AG04449 (cell line): ENCODE measurements at regions of chr11 and their contacts with region 1.

Region 1: GRCh38 chr11:120335908-120336640 is at the start of gene ARHGEF12:
- DNase-seq: peak; percentile 90
- H3K4me3 ChIP-seq: peak within 1 kb of the TSS; percentile 61
- CTCF ChIP-seq: peak; percentile 43

Region 2: DNA sequence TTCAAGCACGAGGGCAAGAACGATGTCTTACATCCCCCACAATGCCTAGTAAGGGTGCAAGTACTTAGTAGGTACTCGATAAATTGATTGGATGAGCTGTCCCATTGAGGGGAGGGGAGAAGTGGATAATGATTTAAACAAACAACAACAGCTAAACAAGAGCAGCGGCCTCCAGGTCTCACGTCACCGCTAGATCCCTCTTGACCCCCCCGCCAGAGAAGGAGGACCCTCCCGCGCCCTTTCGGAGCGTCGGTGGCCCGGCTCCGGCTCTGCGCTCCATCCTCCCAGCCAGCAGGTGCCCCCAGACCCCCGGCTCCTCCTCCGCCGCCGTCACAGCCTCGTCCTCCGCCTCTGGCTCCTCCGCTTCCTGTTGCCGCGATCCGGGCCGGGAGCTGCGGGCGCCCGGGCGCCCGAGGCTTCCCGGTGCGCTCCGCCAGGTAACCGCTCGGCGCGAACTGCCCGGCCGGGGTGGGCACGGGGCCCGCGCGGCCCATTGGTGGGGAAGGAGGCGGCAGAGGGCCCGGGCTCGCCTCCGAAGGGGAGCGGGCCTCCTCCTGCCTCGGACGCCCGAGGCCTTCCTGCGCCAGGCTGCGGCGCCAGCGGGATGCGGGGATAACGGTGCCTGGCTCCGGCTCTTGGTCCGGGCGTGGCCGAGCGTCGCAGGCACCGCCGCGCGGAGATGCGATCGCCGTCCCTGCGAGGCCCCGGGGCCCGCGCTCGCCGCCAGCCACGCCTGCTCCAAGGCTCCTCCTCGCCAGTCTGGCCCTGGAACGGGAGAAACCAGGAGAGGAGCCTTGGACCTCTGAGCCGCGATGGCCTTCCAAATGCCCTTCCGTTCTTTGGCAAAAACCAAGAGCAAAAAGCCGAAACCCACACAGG is 10.9 kb before region 1 on chr11 and contains the start of gene TLCD5:
- CTCF ChIA-PET with region 1: interaction called, 15 read pairs
- POLR2A ChIA-PET with region 1: no interaction called
- DNase-seq: no peak
- H3K4me3 ChIP-seq: peak within 1 kb of the TSS; percentile 70
- CTCF ChIP-seq: peak; percentile 36

Region 3: GRCh38 chr11:120400564-120401364 is 64.7 kb after region 1 on chr11:
- CTCF ChIA-PET with region 1: interaction called, 3 read pairs
- POLR2A ChIA-PET with region 1: interaction called, 10 read pairs
- DNase-seq: peak; percentile 92
- H3K4me3 ChIP-seq: peak overlapping the region; percentile 19
- CTCF ChIP-seq: no peak

Region 4: DNA sequence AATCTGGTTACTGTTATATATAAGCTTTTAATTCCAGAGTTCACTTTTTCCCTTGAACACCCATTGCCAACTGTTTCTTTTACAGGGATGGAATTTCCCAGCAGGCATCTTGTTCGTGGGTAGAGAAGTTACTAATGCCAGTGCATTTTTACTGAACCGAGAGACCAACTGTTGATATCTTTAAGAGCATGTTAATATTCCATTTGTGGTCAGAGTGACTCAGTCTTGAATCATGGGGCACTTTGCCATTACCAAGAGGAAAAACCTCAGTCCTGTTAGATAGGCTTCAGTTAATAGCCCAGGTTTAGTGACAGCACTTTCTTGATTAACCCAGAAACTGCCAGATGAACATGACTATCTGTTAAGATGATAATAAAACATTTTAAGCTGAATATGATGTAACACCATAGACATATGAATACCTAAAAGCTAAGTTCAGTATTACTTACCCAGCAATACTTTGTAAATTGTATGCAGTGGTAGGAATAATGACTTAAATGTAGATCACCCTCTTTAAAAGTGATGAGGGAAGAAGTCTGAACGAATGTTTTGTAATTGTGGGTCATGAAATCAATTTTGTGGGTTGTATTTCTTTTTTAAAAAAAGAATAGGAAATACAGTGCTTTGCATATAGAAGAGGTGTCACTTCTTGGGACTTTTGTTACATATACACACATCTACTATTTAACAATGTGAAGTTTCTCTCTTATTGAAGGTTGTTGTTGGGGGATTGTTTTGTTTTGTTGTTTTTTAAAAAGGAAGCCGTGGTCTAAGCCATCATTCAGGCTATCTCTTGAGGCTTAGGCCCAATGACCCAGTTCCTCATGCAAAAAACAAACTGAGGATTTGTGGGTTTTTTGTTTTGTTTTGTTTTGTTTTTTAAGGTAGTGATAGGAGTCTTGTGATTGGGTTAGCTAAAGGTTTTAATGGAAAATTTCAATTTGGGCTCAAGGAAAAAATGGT is 96.3 kb after region 1 on chr11:
- CTCF ChIA-PET with region 1: interaction called, 22 read pairs
- POLR2A ChIA-PET with region 1: interaction called, 6 read pairs
- DNase-seq: peak; percentile 98
- H3K4me3 ChIP-seq: no peak overlapping the region
- CTCF ChIP-seq: no peak

Region 5: DNA sequence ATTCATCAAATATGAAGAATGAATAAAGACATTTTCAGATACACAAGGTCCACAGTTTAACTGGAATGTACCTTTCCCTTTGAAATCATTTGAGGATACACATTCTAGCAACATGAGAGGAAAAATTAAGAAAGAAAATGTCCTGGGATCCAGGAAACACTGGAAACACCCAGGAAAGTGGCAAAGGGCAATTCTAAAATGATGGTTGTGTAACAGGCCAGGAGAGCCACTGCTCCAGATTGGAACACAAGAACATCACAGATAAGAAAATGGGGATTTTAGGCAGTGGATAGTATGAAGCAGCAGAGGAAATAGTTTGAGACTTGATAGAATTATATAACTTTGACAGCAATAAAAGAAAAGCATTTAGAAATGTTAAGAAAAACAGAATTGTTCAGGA is 119.4 kb after region 1 on chr11:
- CTCF ChIA-PET with region 1: interaction called, 13 read pairs
- POLR2A ChIA-PET with region 1: no interaction called
- DNase-seq: no peak
- H3K4me3 ChIP-seq: no peak overlapping the region
- CTCF ChIP-seq: no peak

Region 6: DNA sequence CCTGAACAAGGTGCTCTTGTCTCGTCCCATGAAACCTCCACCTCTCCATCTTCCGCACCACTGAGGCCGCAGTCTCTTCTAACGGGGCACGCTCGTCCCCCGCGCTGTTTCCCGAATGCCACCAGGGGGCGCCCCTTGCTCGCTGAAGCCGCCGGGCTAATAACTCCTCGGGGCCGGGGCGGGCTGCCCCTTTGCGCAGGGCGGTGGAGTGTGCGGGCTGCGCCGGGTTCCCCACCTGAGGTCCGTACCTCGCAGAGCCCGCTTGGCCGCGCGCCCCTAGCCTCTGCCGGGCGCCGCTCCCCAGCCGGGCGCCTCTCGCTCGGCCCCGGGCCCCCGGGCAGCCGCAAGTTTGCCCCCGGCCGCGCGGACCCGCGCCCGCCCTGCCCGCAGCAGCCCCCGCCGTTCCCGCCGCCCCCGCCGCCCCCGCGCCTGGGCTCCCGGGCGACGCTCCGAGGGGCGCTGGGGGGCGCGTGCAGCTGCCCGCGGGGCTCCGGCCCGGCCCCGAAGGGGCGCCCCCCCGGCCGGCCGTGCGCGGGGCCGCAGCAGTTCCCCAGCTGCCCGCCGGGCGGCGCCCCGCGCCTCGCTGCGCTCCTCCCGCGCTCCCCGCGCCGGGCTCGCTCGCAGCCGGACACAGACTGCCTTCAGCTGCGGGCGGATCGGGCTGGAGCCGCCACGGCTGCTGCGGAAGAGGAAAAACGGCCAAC is 175.2 kb after region 1 on chr11 and contains the start of gene GRIK4:
- CTCF ChIA-PET with region 1: interaction called, 10 read pairs
- POLR2A ChIA-PET with region 1: no interaction called
- DNase-seq: no peak
- H3K4me3 ChIP-seq: peak within 1 kb of the TSS; percentile 49
- CTCF ChIP-seq: peak; percentile 93